Activated B cell treated with CpG ODN at 0.5 μM for 24 hours (primary cell): ENCODE measurements at regions of chr20 and their contacts with region 1.

Region 1: DNA sequence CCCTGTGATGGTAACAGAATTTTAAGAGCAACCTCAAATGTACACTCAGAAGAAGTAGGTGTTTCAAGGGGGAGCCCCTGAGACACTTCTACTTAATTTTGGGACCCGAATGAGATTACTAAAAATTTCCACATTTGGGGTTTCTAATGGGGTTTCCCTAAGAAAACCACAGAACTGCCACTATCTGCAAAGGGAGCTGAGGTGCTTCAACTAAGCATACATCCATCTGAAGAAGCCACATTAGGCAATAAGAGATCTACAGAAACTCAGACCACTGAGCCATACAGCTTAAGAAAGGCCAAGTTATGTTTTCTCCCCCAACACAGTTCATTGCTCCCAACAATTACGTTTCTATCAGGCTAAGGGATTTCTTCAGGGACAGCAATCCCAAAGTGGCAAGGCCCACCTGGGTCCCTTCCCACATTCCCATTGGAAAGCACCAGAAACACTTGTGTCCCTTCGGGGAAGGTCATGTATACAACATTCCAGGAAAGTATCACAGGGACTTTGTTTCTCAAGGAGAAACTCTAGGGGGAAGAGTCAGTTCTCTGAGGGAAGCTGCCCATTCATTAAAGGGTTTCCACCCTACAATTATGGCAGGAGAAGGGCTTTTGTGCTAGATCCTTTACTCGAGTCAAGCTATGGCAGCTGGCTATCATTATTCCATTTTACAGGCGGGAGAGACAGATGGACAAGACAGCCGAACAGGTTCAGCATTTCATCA is 5.0 kb downstream of the BCL2L1 start:
- DNase-seq: no peak
- ATAC-seq: peak; percentile 79
- H3K4me3 Mint-ChIP-seq: peak overlapping the region; percentile 82
- H3K27ac Mint-ChIP-seq: peak overlapping the region; percentile 93
- H3K4me1 Mint-ChIP-seq: peaks cover 82% of the 10 kb centered on the region
- H3K27me3 Mint-ChIP-seq: no peaks in the 10 kb centered on the region
- CTCF ChIP-seq: no peak

Region 2: GRCh38 chr20:31674895-31675827 is 42.5 kb before region 1 on chr20:
- CTCF ChIA-PET with region 1: interaction called, 23 read pairs
- POLR2A ChIA-PET with region 1: interaction called, 24 read pairs
- intact Hi-C with region 1: no loop called
- DNase-seq: peak; percentile 26
- ATAC-seq: peak; percentile 82
- H3K4me3 Mint-ChIP-seq: peak overlapping the region; percentile 89
- H3K27ac Mint-ChIP-seq: peak overlapping the region; percentile 94
- H3K4me1 Mint-ChIP-seq: peaks cover 44% of the 10 kb centered on the region
- H3K27me3 Mint-ChIP-seq: no peaks in the 10 kb centered on the region
- CTCF ChIP-seq: no peak

Region 3: GRCh38 chr20:31684153-31685015 is 33.3 kb before region 1 on chr20:
- CTCF ChIA-PET with region 1: interaction called, 34 read pairs
- POLR2A ChIA-PET with region 1: interaction called, 51 read pairs
- intact Hi-C with region 1: loop called (anchors 1 kb)
- DNase-seq: no peak
- ATAC-seq: peak; percentile 79
- H3K4me3 Mint-ChIP-seq: peak overlapping the region; percentile 68
- H3K27ac Mint-ChIP-seq: peak overlapping the region; percentile 83
- H3K4me1 Mint-ChIP-seq: peaks cover 59% of the 10 kb centered on the region
- H3K27me3 Mint-ChIP-seq: no peaks in the 10 kb centered on the region
- CTCF ChIP-seq: no peak

Region 4: GRCh38 chr20:31738729-31739561 is 21.3 kb after region 1 on chr20 and contains the start of gene TPX2:
- CTCF ChIA-PET with region 1: no interaction called
- POLR2A ChIA-PET with region 1: no interaction called
- intact Hi-C with region 1: loop called (anchors 1 kb)
- DNase-seq: peak; percentile 61
- ATAC-seq: peak; percentile 99
- H3K4me3 Mint-ChIP-seq: no peak within 1 kb of the TSS
- H3K27ac Mint-ChIP-seq: no peak within 1 kb of the TSS
- H3K4me1 Mint-ChIP-seq: no peaks in the 10 kb centered on the region
- H3K27me3 Mint-ChIP-seq: no peaks in the 10 kb centered on the region
- CTCF ChIP-seq: no peak
- total RNA-seq, gene TPX2: 2.2 and 2.8 TPM in 2 replicates